ENCODE measurements at regions of chr1 and their contacts with region 1.

Region 1: GRCh38 chr1:109263597-109264398 is 14.5 kb downstream of the CELSR2 start:
- H3K4me3 ChIP-seq: no peak overlapping the region
- H3K27ac ChIP-seq: no peak overlapping the region
- H3K4me1 ChIP-seq: no peaks in the 10 kb centered on the region
- CTCF ChIP-seq: peak; percentile 97

Region 2: GRCh38 chr1:109248797-109249642 is 14.8 kb before region 1 on chr1 and contains the start of gene CELSR2:
- CTCF ChIA-PET with region 1: interaction called, 10 read pairs
- POLR2A ChIA-PET with region 1: interaction called, 3 read pairs
- H3K4me3 ChIP-seq: peak within 1 kb of the TSS; percentile 45
- H3K27ac ChIP-seq: peak within 1 kb of the TSS; percentile 65; the same call in 1 of the 2 replicates
- H3K4me1 ChIP-seq: peaks cover 5% of the 10 kb centered on the region; the same call in 1 of the 2 replicates
- CTCF ChIP-seq: no peak; the same call in 1 of the 2 replicates

Region 3: GRCh38 chr1:109277434-109278204 is 13.8 kb after region 1 on chr1:
- CTCF ChIA-PET with region 1: interaction called, 16 read pairs
- POLR2A ChIA-PET with region 1: interaction called, 3 read pairs
- H3K4me3 ChIP-seq: no peak overlapping the region
- H3K27ac ChIP-seq: no peak overlapping the region
- H3K4me1 ChIP-seq: peaks cover 10% of the 10 kb centered on the region
- CTCF ChIP-seq: peak; percentile 89

Region 4: GRCh38 chr1:109548321-109549267 is 284.8 kb after region 1 on chr1 and contains the start of gene GNAI3:
- CTCF ChIA-PET with region 1: no interaction called
- POLR2A ChIA-PET with region 1: no interaction called
- H3K4me3 ChIP-seq: peak within 1 kb of the TSS; percentile 57
- H3K27ac ChIP-seq: peak within 1 kb of the TSS; percentile 78
- H3K4me1 ChIP-seq: peaks cover 6% of the 10 kb centered on the region; the same call in 1 of the 2 replicates
- CTCF ChIP-seq: peak; percentile 36; the same call in 1 of the 2 replicates

Measured in HEK293 (cell line).